Mucosa of descending colon (tissue), 3 donors: ENCODE measurements at regions of chr18 and their contacts with region 1.

Region 1: GRCh38 chr18:50194631-50195532 is at the start of gene MYO5B:
- DNase-seq: peak; percentile 88 to 93 (median 90)
- ATAC-seq: peak; percentile 93
- H3K4me3 ChIP-seq: peak within 1 kb of the TSS; percentile 75
- H3K4me1 ChIP-seq: peaks cover 3% of the 10 kb centered on the region
- CTCF ChIP-seq: peak; percentile 65
- total RNA-seq, gene MYO5B: 52.7 to 179 (median 120) TPM

Region 2: DNA sequence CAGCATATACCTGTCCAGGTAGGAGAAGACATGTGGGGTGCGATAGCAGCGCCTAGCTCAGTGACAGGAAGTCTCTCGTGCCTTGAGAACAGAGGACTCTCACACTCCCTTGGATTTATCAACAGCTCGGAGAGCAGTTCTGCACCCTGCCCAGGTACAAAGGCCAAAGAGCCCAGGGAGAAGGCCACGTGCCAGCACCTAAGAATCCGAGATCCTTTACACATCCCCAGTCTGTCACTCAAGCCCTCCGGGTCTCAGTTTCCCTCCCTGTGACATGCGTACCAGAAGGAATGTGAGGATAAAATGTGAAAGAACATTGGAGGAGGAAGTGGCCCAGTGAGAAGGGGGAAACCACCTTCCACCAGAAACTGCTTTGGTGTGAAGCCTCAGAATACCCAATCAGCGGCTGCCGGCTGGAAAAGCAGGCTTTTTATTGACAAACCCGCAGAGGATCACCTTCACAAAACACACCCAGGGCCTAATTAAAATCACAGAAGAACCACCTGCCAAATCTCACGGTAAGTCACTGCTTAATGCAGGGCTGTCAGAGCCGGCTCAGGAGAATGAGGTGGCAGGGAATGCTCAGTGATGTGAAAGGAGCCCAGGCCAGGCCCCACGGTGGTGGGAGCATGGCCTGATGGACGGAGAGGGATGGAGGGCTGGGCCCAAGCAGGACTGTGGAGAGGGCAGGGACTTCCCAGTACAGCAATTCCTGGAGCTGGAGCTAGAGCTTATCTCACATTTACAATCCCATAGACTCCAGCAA is 66.2 kb before region 1 on chr18:
- intact Hi-C with region 1: loop called in 1 of 2 experiments (anchors 10 kb)
- DNase-seq: peak; percentile 78 to 87 (median 83)
- ATAC-seq: peak; percentile 93
- H3K4me3 ChIP-seq: no peak overlapping the region
- H3K4me1 ChIP-seq: peaks cover 31% of the 10 kb centered on the region
- CTCF ChIP-seq: no peak

Region 3: GRCh38 chr18:50297621-50298442 is 103.0 kb after region 1 on chr18:
- intact Hi-C with region 1: no loop called
- DNase-seq: peak; percentile 80 to 87 (median 84)
- ATAC-seq: peak; percentile 98
- H3K4me3 ChIP-seq: no peak overlapping the region
- H3K4me1 ChIP-seq: peaks cover 9% of the 10 kb centered on the region
- CTCF ChIP-seq: no peak

Region 4: DNA sequence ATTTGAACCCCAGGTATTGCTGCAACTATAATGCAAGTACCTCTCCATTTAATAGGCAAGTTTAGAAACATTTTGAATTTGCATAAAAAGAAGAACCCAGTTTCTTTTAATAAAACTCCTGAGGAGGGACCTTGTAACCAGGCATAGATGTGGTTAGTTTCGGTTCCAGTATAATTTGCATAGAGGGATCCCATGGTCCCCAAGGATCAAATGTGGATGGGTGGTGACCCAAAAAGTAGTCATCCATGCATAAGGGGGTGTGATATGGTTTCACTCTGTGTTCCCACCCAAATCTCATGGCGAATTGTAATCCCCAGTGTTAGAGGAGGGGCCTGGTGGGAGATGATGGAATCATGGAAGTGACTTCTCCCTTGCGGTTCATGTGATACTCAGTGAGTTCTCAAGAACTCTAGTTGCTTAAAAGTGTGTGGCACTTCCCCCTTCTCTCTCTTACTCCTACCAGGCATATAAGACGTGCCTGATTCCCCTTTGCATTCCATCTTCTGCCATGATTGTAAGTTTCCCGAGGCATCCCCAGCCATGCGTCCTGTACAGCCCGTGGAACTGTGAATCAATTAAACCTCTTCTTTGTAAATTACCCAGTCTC is 139.8 kb after region 1 on chr18:
- intact Hi-C with region 1: no loop called
- DNase-seq: no peak
- ATAC-seq: peak; percentile 17
- H3K4me3 ChIP-seq: no peak overlapping the region
- H3K4me1 ChIP-seq: no peaks in the 10 kb centered on the region
- CTCF ChIP-seq: no peak